CD4-positive, alpha-beta memory T cell (primary cell): ENCODE measurements at regions of chr11 and their contacts with region 1.

Region 1: GRCh38 chr11:4072668-4073285 is 21.8 kb upstream of the RRM1 start:
- DNase-seq: peak; percentile 64 to 77 (median 76)
- H3K4me3 ChIP-seq: no peak overlapping the region
- H3K4me3 Mint-ChIP-seq: no peak overlapping the region
- H3K27ac ChIP-seq: peak overlapping the region; percentile 17
- H3K27ac Mint-ChIP-seq: peak overlapping the region; percentile 33 to 92 (median 88)
- H3K4me1 ChIP-seq: peaks cover 39% of the 10 kb centered on the region
- H3K4me1 Mint-ChIP-seq: peaks cover 40 to 63% (median 49%) of the 10 kb centered on the region in 4 donors
- H3K27me3 ChIP-seq: no peaks in the 10 kb centered on the region
- H3K27me3 Mint-ChIP-seq: no peaks in the 10 kb centered on the region

Region 2: DNA sequence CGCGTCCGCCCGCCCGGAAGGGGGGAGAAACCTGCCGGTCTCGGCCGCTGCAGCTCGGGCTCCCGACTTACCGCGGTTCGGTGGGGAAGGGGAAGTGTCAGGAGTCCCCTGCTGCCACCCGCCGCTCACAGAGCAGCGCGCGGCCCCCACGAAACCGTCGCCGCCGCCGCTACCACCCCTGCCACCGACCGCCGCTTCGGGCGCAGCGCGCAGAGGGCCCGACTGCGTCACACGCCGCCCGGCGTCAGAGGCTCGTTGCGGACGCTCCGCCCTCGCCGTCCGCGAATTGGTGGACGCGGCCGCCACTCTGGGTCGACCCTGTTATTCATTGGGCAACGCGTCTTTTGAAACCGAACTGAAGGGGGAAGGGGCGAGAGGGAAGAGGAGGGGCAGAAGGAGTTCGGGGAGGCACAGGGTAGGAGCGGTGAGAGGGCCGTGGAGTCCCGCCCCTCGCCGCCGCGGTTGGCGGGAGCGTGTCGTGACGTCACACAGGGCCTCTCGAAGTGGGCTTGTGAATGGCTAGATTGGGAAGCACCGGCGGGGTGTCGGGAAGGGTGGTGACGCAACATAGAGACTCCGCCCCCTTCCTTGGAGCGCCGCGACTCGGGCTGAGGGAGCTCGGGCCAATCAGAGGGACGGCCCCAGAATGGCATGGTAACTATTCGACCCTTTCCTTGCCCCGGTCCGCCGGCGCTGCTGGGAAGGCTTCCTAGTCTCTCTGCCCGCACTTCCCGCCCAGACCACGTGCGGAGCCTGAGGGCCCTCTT is 275.3 kb before region 1 on chr11 and contains the start of gene NUP98:
- CTCF ChIA-PET with region 1: interaction called, 12 read pairs
- POLR2A ChIA-PET with region 1: no interaction called
- intact Hi-C with region 1: no loop called
- DNase-seq: peak; percentile 100
- H3K4me3 ChIP-seq: peak within 1 kb of the TSS; percentile 89 to 98
- H3K4me3 Mint-ChIP-seq: peak within 1 kb of the TSS; percentile 91 to 98 (median 96)
- H3K27ac ChIP-seq: peak within 1 kb of the TSS; percentile 99
- H3K27ac Mint-ChIP-seq: peak within 1 kb of the TSS; percentile 96 to 100 (median 99)
- H3K4me1 ChIP-seq: peaks cover 42% of the 10 kb centered on the region
- H3K4me1 Mint-ChIP-seq: peaks cover 26 to 61% (median 45%) of the 10 kb centered on the region in 4 donors
- H3K27me3 ChIP-seq: no peaks in the 10 kb centered on the region
- H3K27me3 Mint-ChIP-seq: no peaks in the 10 kb centered on the region
- total RNA-seq, gene NUP98: 109 to 112 TPM

Region 3: DNA sequence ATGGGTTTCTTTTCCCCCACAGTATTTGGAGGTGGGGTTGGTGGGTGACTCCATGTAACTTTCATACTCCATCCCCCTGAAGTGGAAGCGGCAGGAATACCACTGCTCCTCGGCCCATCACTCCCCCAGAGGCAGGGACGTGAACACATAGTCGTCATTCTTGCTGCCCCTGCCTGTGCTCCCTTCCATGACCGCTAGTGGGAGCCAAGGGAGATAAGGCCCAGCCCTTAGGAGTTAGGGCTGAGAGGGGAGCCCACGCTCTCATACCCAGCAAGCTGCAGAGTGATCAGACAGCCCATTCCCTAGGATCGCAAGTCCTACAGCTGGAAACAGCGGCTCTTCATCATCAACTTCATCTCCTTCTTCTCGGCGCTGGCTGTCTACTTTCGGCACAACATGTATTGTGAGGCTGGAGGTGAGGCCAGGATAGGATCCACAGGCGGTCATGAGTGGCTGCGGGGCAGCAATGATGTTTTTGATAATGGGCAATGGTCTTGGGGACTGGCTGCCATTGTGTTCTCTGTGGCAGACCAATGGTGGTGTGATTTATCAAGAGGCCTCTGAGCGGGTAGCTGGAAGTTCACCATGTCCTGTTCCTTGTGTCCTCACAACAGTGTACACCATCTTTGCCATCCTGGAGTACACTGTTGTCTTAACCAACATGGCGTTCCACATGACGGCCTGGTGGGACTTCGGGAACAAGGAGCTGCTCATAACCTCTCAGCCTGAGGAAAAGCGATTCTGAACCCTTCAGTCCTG is 247.9 kb before region 1 on chr11:
- CTCF ChIA-PET with region 1: interaction called, 41 read pairs
- POLR2A ChIA-PET with region 1: interaction called, 4 read pairs
- intact Hi-C with region 1: loop called (anchors 1 kb)
- DNase-seq: peak; percentile 75 to 85 (median 78)
- H3K4me3 ChIP-seq: no peak overlapping the region
- H3K4me3 Mint-ChIP-seq: peak overlapping the region in 4 of 8 donors; percentile 13 to 50 (median 34)
- H3K27ac ChIP-seq: peak overlapping the region; percentile 22
- H3K27ac Mint-ChIP-seq: peak overlapping the region; percentile 79 to 94 (median 89)
- H3K4me1 ChIP-seq: peaks cover 20% of the 10 kb centered on the region
- H3K4me1 Mint-ChIP-seq: peaks cover 20 to 47% (median 32%) of the 10 kb centered on the region in 4 donors
- H3K27me3 ChIP-seq: no peaks in the 10 kb centered on the region
- H3K27me3 Mint-ChIP-seq: no peaks in the 10 kb centered on the region

Region 4: DNA sequence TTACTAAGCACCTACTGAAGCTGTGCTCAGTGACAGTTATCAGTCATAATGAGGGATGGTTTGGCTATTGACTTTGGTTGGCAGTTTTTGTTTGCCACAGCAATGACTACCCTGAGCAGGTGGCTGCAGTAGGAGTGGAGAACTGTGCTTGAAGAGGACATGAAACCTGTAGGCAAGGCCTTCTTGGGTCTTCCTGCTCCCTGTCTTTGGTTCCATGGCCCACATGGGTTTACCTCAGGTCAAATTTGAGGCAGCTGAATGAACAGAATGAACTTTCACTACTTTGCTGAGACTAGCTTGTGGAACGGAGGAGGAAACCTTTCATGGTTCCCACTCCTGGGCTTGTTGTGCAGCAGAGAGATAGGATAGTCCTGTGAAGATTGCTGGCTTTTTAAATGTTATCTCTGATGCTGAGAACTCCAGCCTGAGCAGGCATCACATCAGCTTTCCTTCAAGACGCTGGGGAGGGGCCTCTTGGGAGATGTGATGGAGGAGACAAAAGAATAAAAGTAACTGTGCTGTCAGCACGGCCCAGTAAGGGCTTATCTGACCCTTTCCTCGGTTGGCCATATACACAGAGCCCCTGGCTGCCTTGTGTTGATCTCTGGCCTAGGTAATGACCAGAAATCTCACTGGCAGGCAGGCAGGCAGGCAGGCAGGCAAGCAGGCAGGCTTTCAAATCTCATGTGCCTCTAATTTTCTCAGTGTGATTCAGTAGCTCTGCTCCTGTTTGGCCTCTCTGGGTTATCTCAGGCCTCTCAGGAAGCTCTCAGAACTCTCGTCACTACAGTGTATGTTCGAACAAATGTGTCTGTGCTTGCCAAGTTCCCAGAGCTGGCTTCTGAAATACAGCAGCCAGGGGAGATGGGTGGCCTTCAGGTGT is 205.3 kb before region 1 on chr11:
- CTCF ChIA-PET with region 1: interaction called, 17 read pairs
- POLR2A ChIA-PET with region 1: no interaction called
- intact Hi-C with region 1: no loop called
- DNase-seq: no peak
- H3K4me3 ChIP-seq: no peak overlapping the region
- H3K4me3 Mint-ChIP-seq: peak overlapping the region in 7 of 8 donors; percentile 17 to 70 (median 24)
- H3K27ac ChIP-seq: no peak overlapping the region
- H3K27ac Mint-ChIP-seq: peak overlapping the region; percentile 60 to 93 (median 87)
- H3K4me1 ChIP-seq: peaks cover 88% of the 10 kb centered on the region
- H3K4me1 Mint-ChIP-seq: peaks cover 63 to 97% (median 83%) of the 10 kb centered on the region in 4 donors
- H3K27me3 ChIP-seq: no peaks in the 10 kb centered on the region
- H3K27me3 Mint-ChIP-seq: no peaks in the 10 kb centered on the region

Region 5: GRCh38 chr11:3939211-3939610 is 133.6 kb before region 1 on chr11:
- CTCF ChIA-PET with region 1: interaction called, 179 read pairs
- POLR2A ChIA-PET with region 1: interaction called, 24 read pairs
- intact Hi-C with region 1: loop called (anchors 1 kb)
- DNase-seq: no peak
- H3K4me3 ChIP-seq: no peak overlapping the region
- H3K4me3 Mint-ChIP-seq: no peak overlapping the region
- H3K27ac ChIP-seq: no peak overlapping the region
- H3K27ac Mint-ChIP-seq: peak overlapping the region; percentile 9 to 82 (median 77)
- H3K4me1 ChIP-seq: peaks cover 70% of the 10 kb centered on the region
- H3K4me1 Mint-ChIP-seq: peaks cover 63 to 85% (median 75%) of the 10 kb centered on the region in 4 donors
- H3K27me3 ChIP-seq: no peaks in the 10 kb centered on the region
- H3K27me3 Mint-ChIP-seq: no peaks in the 10 kb centered on the region

Region 6: GRCh38 chr11:4044976-4045646 is 27.7 kb before region 1 on chr11:
- CTCF ChIA-PET with region 1: interaction called, 16 read pairs
- POLR2A ChIA-PET with region 1: interaction called, 3 read pairs
- intact Hi-C with region 1: no loop called
- DNase-seq: no peak
- H3K4me3 ChIP-seq: no peak overlapping the region
- H3K4me3 Mint-ChIP-seq: no peak overlapping the region
- H3K27ac ChIP-seq: no peak overlapping the region
- H3K27ac Mint-ChIP-seq: peak overlapping the region in 6 of 7 donors; percentile 11 to 84 (median 42)
- H3K4me1 ChIP-seq: peaks cover 10% of the 10 kb centered on the region
- H3K4me1 Mint-ChIP-seq: peaks cover 24 to 39% (median 31%) of the 10 kb centered on the region in 4 donors
- H3K27me3 ChIP-seq: no peaks in the 10 kb centered on the region
- H3K27me3 Mint-ChIP-seq: no peaks in the 10 kb centered on the region

Region 7: DNA sequence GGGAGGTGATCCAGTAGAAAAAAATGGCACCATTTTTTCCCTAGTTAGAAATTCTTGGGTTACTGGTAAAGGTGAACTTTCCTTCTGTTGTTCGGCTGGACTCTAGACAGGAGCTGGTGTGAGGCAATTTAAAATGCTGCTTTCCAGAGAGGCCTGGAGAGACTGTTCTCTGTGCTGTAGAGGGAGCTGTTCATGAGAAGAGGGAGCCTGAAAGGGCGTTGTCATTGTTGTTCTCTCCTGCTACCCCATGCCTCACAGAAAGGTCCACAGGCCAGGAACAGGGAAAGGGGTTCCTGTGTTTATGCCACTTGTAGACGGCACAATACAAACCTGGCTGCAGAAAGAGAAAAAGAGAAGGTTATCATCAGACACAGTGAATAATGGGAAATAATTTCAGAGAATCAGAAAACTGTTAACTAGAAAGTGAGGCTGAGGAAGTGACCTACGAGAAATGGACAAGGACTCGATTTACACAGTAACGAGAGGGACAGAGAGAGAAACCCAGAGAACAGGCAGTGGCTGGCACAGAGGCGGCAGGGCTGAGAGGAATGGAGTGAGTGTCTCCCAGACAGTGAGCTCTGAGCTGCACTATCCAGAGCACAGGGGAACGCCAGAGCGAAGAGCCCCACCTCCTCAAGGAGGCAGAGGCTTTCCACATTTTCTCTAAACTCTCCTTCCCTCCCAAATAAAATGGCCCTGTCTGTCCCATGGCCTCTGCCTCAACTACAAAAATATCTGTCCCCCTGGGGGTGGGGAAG is 131.0 kb after region 1 on chr11:
- CTCF ChIA-PET with region 1: no interaction called
- POLR2A ChIA-PET with region 1: no interaction called
- intact Hi-C with region 1: no loop called
- DNase-seq: no peak
- H3K4me3 ChIP-seq: no peak overlapping the region
- H3K4me3 Mint-ChIP-seq: no peak overlapping the region
- H3K27ac ChIP-seq: no peak overlapping the region
- H3K27ac Mint-ChIP-seq: peak overlapping the region in 1 of 7 donors; percentile 32
- H3K4me1 ChIP-seq: no peaks in the 10 kb centered on the region
- H3K4me1 Mint-ChIP-seq: no peaks in the 10 kb centered on the region
- H3K27me3 ChIP-seq: no peaks in the 10 kb centered on the region
- H3K27me3 Mint-ChIP-seq: peaks cover 12 to 17% of the 10 kb centered on the region in 2 donors